Activated CD4-positive, alpha-beta T cell treated with anti-CD3 and anti-CD28 coated beads, Interleukin-2, amount 10 ng/mL, durations not matched to agents 7 days and 5 days (primary cell): ENCODE measurements at regions of chr5 and their contacts with region 1.

Region 1: GRCh38 chr5:80083101-80083890 is 48.1 kb downstream of the THBS4 start:
- DNase-seq: no peak
- H3K4me3 Mint-ChIP-seq: peak overlapping the region; percentile 70
- H3K27ac Mint-ChIP-seq: peak overlapping the region; percentile 78
- H3K4me1 Mint-ChIP-seq: peaks cover 18% of the 10 kb centered on the region
- H3K27me3 Mint-ChIP-seq: no peaks in the 10 kb centered on the region

Region 2: DNA sequence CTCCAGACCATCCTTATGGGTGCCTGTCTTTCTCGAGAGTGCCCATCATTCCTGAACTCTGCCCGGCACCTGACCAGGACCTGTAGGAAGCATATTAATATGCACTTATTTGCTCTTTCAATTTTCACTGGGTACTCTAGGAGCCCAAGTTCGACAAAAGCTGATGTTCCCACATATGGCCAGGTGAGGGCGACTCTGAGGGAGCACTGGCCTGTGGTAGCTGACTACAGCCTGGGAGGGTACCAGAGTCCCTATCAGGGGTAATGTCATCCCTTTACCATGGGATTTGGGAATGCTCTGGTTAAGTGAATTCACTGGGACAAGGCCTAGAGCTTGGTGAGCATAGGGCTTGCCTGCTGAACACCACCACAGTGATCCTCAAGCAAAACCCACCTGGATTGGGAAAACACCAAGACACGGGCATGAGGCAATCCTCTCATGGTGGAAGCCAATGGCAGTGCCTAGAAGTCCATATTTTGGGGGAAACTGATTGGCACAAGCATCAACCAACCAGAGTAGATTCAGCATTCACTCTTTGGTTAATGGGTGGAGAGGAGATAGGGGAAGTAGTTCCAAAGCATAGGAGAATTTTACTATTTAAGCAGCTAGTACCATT is 204.5 kb before region 1 on chr5:
- CTCF ChIA-PET with region 1: interaction called, 13 read pairs
- POLR2A ChIA-PET with region 1: no interaction called
- DNase-seq: peak; percentile 24
- H3K4me3 Mint-ChIP-seq: no peak overlapping the region
- H3K27ac Mint-ChIP-seq: no peak overlapping the region
- H3K4me1 Mint-ChIP-seq: peaks cover 3% of the 10 kb centered on the region
- H3K27me3 Mint-ChIP-seq: no peaks in the 10 kb centered on the region

Region 3: DNA sequence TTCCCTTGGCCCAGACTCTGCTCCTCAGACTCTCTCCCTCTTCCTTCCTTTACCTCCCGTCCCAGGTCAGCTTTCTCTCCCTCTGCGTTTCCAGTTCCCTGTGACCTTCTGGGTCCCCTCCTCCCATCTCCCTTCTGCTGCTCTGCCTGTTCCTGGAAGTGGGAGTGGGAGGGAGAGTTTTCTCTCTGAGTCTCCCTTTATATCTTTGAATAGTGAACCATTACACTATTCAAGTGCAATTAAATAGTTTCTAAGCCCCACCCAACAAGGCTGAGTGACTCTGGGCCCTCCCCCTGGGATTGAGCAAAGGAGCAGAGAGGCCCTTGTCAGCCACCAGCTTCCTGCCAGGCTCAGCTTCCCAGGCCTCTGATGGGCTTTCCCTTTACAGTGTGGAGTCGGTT is 13.4 kb before region 1 on chr5:
- CTCF ChIA-PET with region 1: interaction called, 10 read pairs
- POLR2A ChIA-PET with region 1: no interaction called
- DNase-seq: no peak
- H3K4me3 Mint-ChIP-seq: no peak overlapping the region
- H3K27ac Mint-ChIP-seq: peak overlapping the region; percentile 7
- H3K4me1 Mint-ChIP-seq: peaks cover 18% of the 10 kb centered on the region
- H3K27me3 Mint-ChIP-seq: no peaks in the 10 kb centered on the region

Region 4: DNA sequence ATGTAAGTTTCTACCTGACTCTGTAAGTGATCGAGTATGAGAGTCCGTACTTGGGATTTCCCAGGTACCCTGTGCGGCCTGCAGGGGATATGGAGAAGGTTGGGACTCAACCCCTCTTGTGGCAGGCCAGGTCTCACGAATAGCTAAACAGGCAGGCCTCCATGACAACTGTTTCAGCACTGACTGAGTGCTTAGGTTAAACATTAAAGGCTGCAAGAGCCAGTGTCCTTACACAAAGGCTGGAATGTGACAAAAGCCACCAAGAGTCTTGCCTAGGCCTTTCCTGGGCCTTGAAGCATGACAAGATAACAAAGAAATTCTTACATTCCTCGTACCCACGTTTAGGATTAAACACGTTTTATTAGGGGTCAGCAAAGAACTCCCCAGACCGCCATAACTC is 10.5 kb after region 1 on chr5:
- CTCF ChIA-PET with region 1: interaction called, 20 read pairs
- POLR2A ChIA-PET with region 1: no interaction called
- DNase-seq: no peak
- H3K4me3 Mint-ChIP-seq: no peak overlapping the region
- H3K27ac Mint-ChIP-seq: peak overlapping the region; percentile 88
- H3K4me1 Mint-ChIP-seq: peaks cover 34% of the 10 kb centered on the region
- H3K27me3 Mint-ChIP-seq: no peaks in the 10 kb centered on the region

Region 5: DNA sequence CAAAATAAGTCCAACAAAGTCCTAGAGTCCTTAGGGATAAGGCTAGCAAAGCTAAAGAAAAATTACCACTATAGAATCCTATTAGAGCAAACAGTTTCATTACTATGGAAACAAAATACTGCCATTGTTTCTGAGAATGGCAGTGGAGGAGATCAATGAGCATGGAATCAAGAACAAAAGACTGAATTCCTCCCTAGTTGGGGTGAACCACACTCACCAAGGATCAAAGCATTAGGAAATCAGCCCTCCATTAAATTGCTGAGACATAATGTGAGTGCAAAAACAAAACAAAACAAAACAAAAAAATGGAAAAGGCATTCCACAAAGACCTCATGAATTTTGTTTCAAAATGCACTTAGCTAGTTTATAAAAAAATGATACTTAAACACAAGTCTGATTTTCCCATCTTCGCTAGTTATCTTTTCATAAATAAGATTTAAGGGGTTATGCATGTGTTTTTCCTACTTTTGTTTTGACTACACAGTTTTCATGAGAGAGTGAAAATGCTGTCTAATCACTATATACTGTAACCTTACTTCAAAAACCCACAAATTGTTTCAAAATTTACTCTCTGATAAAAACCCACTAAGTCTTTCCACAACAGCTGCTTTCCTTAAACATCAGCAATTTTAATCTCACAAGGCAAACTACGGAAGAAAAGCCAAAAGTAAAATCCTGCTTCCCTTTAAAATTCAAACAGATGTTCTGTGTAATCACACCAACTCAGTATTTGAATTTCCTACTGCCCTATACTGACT is 162.9 kb after region 1 on chr5:
- CTCF ChIA-PET with region 1: no interaction called
- POLR2A ChIA-PET with region 1: no interaction called
- DNase-seq: no peak
- H3K4me3 Mint-ChIP-seq: no peak overlapping the region
- H3K27ac Mint-ChIP-seq: peak overlapping the region; percentile 81
- H3K4me1 Mint-ChIP-seq: peaks cover 64% of the 10 kb centered on the region
- H3K27me3 Mint-ChIP-seq: no peaks in the 10 kb centered on the region

Region 6: DNA sequence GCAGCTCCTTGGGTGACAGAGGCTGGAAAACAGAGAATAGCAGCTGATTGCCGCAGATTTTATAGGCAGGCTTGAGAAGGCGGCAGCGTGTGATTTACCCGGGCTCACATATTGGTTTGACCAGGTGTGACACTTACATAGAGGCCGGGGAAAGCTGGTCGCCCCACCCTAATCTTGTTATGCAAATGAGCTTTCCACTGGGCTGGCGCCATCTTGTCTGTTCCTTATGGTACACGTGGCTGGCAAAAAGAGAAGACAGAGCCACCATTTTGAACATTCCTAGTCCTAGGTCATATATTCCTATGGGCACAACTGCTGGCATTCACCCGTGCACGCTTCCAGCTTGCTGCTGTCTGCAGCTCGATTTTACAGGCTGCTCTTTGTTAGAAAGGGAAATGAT is 225.2 kb after region 1 on chr5:
- CTCF ChIA-PET with region 1: interaction called, 17 read pairs
- POLR2A ChIA-PET with region 1: no interaction called
- DNase-seq: no peak
- H3K4me3 Mint-ChIP-seq: no peak overlapping the region
- H3K27ac Mint-ChIP-seq: no peak overlapping the region
- H3K4me1 Mint-ChIP-seq: no peaks in the 10 kb centered on the region
- H3K27me3 Mint-ChIP-seq: no peaks in the 10 kb centered on the region